Activated CD8-positive, alpha-beta T cell treated with anti-CD3 and anti-CD28 coated beads for 36 hours (primary cell): ENCODE measurements at regions of chr4 and their contacts with region 1.

Region 1: GRCh38 chr4:147866532-147867271 is 134.8 kb downstream of the ARHGAP10 start:
- DNase-seq: peak; percentile 97
- ATAC-seq: peak; percentile 95
- H3K4me3 Mint-ChIP-seq: no peak overlapping the region
- H3K27ac Mint-ChIP-seq: no peak overlapping the region
- H3K4me1 Mint-ChIP-seq: no peaks in the 10 kb centered on the region
- H3K27me3 Mint-ChIP-seq: no peaks in the 10 kb centered on the region
- CTCF ChIP-seq: peak; percentile 99

Region 2: GRCh38 chr4:147617173-147617840 is 249.4 kb before region 1 on chr4 and contains the start of gene TMEM184C:
- CTCF ChIA-PET with region 1: interaction called, 36 read pairs
- POLR2A ChIA-PET with region 1: no interaction called
- intact Hi-C with region 1: no loop called
- DNase-seq: peak; percentile 99
- ATAC-seq: peak; percentile 99
- H3K4me3 Mint-ChIP-seq: peak within 1 kb of the TSS; percentile 95
- H3K27ac Mint-ChIP-seq: peak within 1 kb of the TSS; percentile 95
- H3K4me1 Mint-ChIP-seq: peaks cover 29% of the 10 kb centered on the region
- H3K27me3 Mint-ChIP-seq: no peaks in the 10 kb centered on the region
- CTCF ChIP-seq: no peak
- total RNA-seq, gene TMEM184C: 13.2 to 18.4 TPM

Region 3: GRCh38 chr4:147689067-147689466 is 177.6 kb before region 1 on chr4:
- CTCF ChIA-PET with region 1: interaction called, 47 read pairs
- POLR2A ChIA-PET with region 1: no interaction called
- intact Hi-C with region 1: no loop called
- DNase-seq: peak; percentile 65
- ATAC-seq: peak; percentile 59
- H3K4me3 Mint-ChIP-seq: no peak overlapping the region
- H3K27ac Mint-ChIP-seq: peak overlapping the region; percentile 76
- H3K4me1 Mint-ChIP-seq: peaks cover 8% of the 10 kb centered on the region
- H3K27me3 Mint-ChIP-seq: peaks cover 10% of the 10 kb centered on the region
- CTCF ChIP-seq: no peak

Region 4: GRCh38 chr4:147731580-147732517 is 134.9 kb before region 1 on chr4 and contains the start of gene ARHGAP10:
- CTCF ChIA-PET with region 1: interaction called, 26 read pairs
- POLR2A ChIA-PET with region 1: interaction called, 3 read pairs
- intact Hi-C with region 1: no loop called
- DNase-seq: peak; percentile 75
- ATAC-seq: peak; percentile 81
- H3K4me3 Mint-ChIP-seq: peak within 1 kb of the TSS; percentile 80
- H3K27ac Mint-ChIP-seq: peak within 1 kb of the TSS; percentile 78
- H3K4me1 Mint-ChIP-seq: peaks cover 33% of the 10 kb centered on the region
- H3K27me3 Mint-ChIP-seq: peaks cover 4% of the 10 kb centered on the region
- CTCF ChIP-seq: no peak
- total RNA-seq, gene ARHGAP10: 4.0 to 5.1 TPM

Region 5: GRCh38 chr4:147793569-147794313 is 73.0 kb before region 1 on chr4:
- CTCF ChIA-PET with region 1: interaction called, 30 read pairs
- POLR2A ChIA-PET with region 1: interaction called, 4 read pairs
- intact Hi-C with region 1: no loop called
- DNase-seq: peak; percentile 49
- ATAC-seq: peak; percentile 69
- H3K4me3 Mint-ChIP-seq: peak overlapping the region; percentile 18
- H3K27ac Mint-ChIP-seq: peak overlapping the region; percentile 43
- H3K4me1 Mint-ChIP-seq: peaks cover 45% of the 10 kb centered on the region
- H3K27me3 Mint-ChIP-seq: peaks cover 1% of the 10 kb centered on the region
- CTCF ChIP-seq: no peak

Region 6: DNA sequence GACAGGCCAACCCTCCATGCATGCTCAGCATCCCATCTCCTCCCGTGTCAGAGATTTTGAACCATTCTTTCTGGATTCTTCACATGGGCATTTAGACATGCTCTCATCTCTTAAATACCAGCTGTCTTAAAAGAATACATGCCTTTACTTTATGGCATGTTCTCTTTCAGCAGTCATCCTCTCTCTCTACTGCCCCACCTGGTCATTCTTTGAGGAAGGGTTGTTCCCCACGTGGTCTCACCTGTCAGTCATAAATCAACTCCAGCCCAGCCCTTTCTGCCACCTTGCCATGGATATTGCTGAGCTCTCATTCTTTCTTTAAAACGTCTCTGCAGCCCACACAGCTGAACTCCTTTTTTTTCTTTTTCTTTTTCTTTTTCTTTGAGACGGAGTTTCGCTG is 23.5 kb before region 1 on chr4:
- CTCF ChIA-PET with region 1: interaction called, 103 read pairs
- POLR2A ChIA-PET with region 1: no interaction called
- intact Hi-C with region 1: no loop called
- DNase-seq: peak; percentile 43
- ATAC-seq: peak; percentile 69
- H3K4me3 Mint-ChIP-seq: no peak overlapping the region
- H3K27ac Mint-ChIP-seq: no peak overlapping the region
- H3K4me1 Mint-ChIP-seq: peaks cover 4% of the 10 kb centered on the region
- H3K27me3 Mint-ChIP-seq: no peaks in the 10 kb centered on the region
- CTCF ChIP-seq: peak; percentile 31

Region 7: GRCh38 chr4:147916351-147916750 is 49.6 kb after region 1 on chr4:
- CTCF ChIA-PET with region 1: interaction called, 10 read pairs
- POLR2A ChIA-PET with region 1: no interaction called
- intact Hi-C with region 1: no loop called
- DNase-seq: no peak
- ATAC-seq: no peak
- H3K4me3 Mint-ChIP-seq: no peak overlapping the region
- H3K27ac Mint-ChIP-seq: no peak overlapping the region
- H3K4me1 Mint-ChIP-seq: no peaks in the 10 kb centered on the region
- H3K27me3 Mint-ChIP-seq: no peaks in the 10 kb centered on the region
- CTCF ChIP-seq: no peak